Kidney (tissue), 22 donors: ENCODE measurements at regions of chr15 and their contacts with region 1.

Region 1: DNA sequence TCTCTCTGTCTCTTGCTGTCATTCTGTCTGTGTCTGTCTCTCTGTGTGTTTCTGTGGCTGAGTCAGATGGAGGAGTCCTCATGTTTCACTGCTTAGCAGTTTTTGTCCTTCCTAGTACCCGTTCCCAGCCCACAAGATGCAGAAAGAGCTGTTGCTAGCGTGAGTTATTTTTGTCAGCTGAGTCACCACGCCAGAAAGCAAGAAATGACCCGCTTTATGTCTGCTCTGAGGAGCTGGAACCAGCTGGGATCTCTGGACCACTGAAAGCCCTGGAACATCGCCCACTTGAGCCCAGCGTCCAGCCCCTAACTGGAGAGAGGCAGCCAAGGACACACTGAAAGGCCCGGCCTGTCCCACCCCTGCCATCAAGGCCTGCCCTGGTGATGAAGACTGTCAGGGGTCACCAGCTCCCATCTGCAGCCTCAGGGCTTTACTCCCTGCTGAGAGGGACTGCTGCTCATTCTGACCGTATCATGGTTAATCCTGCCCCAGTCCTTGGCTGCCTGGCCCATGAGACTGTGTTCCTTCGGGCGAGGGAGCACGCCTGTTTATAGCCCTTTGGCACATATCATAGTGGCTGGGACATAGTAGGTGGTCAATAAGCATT is 101.7 kb upstream of the TPM1 start:
- DNase-seq: peak in 4 of 5 donors; percentile 52 to 96 (median 76)
- H3K4me3 ChIP-seq: no peak overlapping the region
- H3K27ac ChIP-seq: peak overlapping the region; percentile 25 to 57
- H3K4me1 ChIP-seq: peaks cover 0 to 8% (median 2%) of the 10 kb centered on the region in 3 donors
- H3K27me3 ChIP-seq: no peaks in the 10 kb centered on the region
- CTCF ChIP-seq: no peak

Region 2: DNA sequence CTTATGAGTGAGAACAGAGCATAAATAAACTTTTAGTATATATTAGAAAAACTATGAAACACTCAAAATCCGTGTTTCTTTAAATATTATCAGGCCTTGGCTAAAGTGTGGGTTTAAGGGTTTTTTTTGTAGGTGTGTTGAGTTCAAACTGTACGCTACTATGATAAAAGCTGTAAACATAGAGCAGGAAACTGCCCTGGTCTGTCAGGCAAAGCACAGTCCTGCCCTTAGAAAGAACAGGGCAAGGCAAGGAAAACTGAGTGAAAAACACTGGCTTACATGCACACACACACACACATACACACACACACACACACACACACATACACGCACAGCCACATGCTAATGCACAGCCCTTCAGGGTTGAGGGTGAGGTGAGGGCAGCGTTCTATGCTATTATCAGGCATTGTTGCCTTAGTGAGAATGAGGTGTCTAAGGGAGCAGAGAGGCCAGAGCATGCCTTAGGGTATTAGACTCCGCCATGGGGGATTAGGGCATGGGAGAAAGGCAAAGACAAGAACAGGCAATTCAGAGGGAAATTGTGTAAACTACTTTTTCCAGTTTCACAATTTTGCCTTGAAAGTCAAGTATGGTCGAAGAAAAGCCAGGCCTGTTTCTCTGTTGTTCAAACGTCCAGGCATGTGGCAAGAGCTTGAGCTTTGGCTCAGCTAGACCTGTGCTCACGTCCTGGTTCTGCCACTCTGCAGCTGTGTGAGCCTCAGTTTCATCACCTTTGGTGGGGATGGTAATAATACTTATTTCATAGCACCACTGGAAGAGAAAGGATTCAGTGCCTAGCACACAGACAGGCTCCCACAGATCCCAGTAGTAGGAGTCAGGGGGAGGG is 65.4 kb after region 1 on chr15:
- intact Hi-C with region 1: loop called (anchors 10 kb)
- DNase-seq: no peak
- H3K4me3 ChIP-seq: no peak overlapping the region
- H3K27ac ChIP-seq: no peak overlapping the region
- H3K4me1 ChIP-seq: no peaks in the 10 kb centered on the region
- H3K27me3 ChIP-seq: no peaks in the 10 kb centered on the region
- CTCF ChIP-seq: no peak